Keratinocyte (primary cell): ENCODE measurements at regions of chr2 and their contacts with region 1.

Region 1: DNA sequence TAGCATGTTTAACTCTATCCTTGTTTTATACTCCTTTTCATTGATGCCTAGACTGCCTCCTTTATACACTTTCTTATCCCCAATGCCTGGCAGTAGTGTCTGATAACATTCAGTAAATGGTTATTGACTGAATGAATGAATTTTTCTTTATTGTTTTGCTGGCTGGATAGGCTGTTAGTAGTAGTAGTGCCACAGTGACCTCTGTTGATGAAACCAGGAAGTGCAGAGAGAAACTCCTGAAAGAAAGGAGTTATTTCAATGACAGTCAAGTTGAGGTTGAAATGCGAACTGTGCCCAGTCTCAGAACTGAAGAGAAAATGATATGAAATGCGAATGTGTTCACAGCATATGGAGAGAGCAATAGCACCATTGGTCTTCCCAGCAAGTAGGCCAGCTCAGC is 26.8 kb upstream of the SLC9A2 start:
- DNase-seq: no peak
- H3K4me3 ChIP-seq: no peak overlapping the region
- H3K27ac ChIP-seq: no peak overlapping the region
- H3K4me1 ChIP-seq: no peaks in the 10 kb centered on the region
- H3K27me3 ChIP-seq: no peaks in the 10 kb centered on the region
- CTCF ChIP-seq: peak; percentile 37 to 68 (median 66)

Region 2: GRCh38 chr2:102473020-102473419 is 119.6 kb before region 1 on chr2 and contains the start of gene SLC9A4:
- dilution Hi-C with region 1: loop called (anchors 25 kb)
- DNase-seq: peak; percentile 15
- H3K4me3 ChIP-seq: no peak within 1 kb of the TSS
- H3K27ac ChIP-seq: no peak within 1 kb of the TSS
- H3K4me1 ChIP-seq: no peaks in the 10 kb centered on the region
- H3K27me3 ChIP-seq: no peaks in the 10 kb centered on the region
- CTCF ChIP-seq: peak; percentile 68 to 92 (median 78)
- polyA plus RNA-seq, gene SLC9A4: not detected in 3 replicates

Region 3: GRCh38 chr2:102498414-102498813 is 94.2 kb before region 1 on chr2:
- dilution Hi-C with region 1: no loop called
- DNase-seq: no peak
- H3K4me3 ChIP-seq: no peak overlapping the region
- H3K27ac ChIP-seq: no peak overlapping the region
- H3K4me1 ChIP-seq: no peaks in the 10 kb centered on the region
- H3K27me3 ChIP-seq: no peaks in the 10 kb centered on the region
- CTCF ChIP-seq: no peak

Region 4: GRCh38 chr2:102703748-102704147 is 111.2 kb after region 1 on chr2:
- dilution Hi-C with region 1: no loop called
- DNase-seq: no peak
- H3K4me3 ChIP-seq: no peak overlapping the region
- H3K27ac ChIP-seq: no peak overlapping the region
- H3K4me1 ChIP-seq: peaks cover under 1% of the 10 kb centered on the region
- H3K27me3 ChIP-seq: peaks cover 4% of the 10 kb centered on the region
- CTCF ChIP-seq: peak; percentile 44 to 56 (median 54)

Region 5: DNA sequence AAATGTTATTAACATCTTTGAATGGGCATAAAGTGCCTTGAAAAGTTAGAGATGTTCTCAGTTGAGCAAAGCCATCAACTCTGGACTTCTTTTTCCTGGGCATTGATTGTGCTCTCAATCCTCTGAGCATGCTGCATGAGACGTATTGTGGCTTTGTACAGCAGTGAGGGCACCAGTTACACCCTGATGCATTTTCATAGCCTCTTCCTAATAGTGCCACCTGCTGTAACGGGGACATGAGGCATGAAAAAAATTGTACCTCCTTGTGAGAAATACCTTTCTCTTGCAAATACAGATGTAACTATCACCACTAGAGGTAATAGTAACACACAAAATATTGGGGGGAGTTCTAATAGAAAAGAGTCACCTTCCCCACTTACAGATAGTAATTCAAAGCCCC is 866.7 kb after region 1 on chr2:
- dilution Hi-C with region 1: no loop called
- DNase-seq: no peak
- H3K4me3 ChIP-seq: no peak overlapping the region
- H3K27ac ChIP-seq: no peak overlapping the region
- H3K4me1 ChIP-seq: no peaks in the 10 kb centered on the region
- H3K27me3 ChIP-seq: no peaks in the 10 kb centered on the region
- CTCF ChIP-seq: no peak